Ovary (tissue), 10 donors: ENCODE measurements at regions of chr16 and their contacts with region 1.

Region 1: DNA sequence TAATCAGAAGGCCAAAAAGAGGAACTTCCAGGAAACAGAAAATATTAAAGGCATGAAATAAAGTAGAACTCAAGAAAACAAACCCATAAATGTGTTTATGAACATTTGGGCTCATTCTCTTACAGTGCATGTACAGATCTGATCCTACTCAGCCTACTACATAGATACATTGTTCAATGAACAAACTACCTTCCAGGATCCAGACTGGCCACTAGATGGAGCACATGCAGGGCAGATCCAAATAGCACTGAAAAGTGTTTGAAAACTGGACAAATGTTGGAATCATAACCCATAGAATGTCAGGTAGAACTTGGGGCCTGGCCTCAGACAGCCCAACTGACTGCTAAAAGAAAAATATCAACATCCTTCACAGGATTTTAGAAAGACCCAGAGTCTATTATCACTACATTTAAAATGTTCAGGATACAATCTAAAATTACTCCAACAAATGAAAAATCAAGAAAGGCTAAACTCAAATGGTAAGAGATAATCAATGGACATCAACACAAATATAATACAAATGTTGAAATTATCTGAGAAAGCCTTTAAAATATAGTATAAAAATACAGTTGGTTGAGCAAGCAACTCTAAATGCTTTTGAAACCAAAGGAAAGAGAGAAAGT is 122.4 kb upstream of the NUDT7 start:
- DNase-seq: no peak
- H3K4me3 ChIP-seq: no peak overlapping the region
- H3K27ac ChIP-seq: no peak overlapping the region
- H3K4me1 ChIP-seq: no peaks in the 10 kb centered on the region
- H3K27me3 ChIP-seq: no peaks in the 10 kb centered on the region
- CTCF ChIP-seq: no peak
- EP300 ChIP-seq: no peak
- POLR2A ChIP-seq: no peak

Region 2: GRCh38 chr16:77531752-77532151 is 68.2 kb before region 1 on chr16:
- intact Hi-C with region 1: loop called in 1 of 4 experiments (anchors 10 kb)
- DNase-seq: no peak
- H3K4me3 ChIP-seq: no peak overlapping the region
- H3K27ac ChIP-seq: no peak overlapping the region
- H3K4me1 ChIP-seq: no peaks in the 10 kb centered on the region
- H3K27me3 ChIP-seq: no peaks in the 10 kb centered on the region
- CTCF ChIP-seq: no peak
- EP300 ChIP-seq: no peak
- POLR2A ChIP-seq: no peak